PC-3 (cell line): ENCODE measurements at regions of chr12 and their contacts with region 1.

Region 1: DNA sequence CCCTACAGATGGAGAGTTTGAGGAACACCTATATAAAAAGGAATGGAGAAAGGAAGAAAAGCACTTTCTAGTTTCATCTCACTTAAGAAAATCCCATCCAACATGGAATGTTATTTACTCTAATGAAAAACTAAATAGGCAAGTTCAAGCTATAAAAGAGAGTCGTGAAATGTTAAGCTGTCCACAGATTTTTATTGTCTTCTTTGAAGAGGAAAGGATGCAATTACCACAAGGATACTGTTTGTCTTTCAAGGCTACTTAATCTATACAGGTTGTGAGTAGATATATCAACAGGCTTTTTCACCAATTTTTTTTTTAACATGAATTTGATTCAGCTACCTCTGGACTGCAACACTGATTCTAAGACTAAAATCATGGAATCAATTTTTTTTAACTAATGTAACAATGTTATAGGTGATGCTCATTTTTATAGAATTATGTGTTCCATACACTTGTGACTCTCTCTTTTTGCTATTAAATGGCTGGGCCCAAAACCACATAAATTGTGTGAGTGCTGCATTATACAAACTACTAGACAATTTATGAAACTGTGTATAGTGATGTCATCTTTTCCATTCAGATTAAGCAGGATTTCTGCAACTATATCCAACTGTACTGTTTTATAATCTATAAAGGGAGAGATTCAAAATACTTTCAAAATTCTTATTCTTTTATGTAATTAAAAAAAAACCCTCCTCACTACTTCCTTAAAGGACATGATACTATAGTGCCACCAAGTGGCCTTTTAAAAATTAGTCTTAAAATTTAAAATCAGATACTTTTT is 26.8 kb upstream of the BMAL2 start:
- DNase-seq: peak; percentile 84
- ATAC-seq: peak; percentile 43
- H3K4me3 ChIP-seq: no peak overlapping the region
- H3K27ac ChIP-seq: no peak overlapping the region
- H3K4me1 ChIP-seq: peaks cover 10% of the 10 kb centered on the region
- H3K27me3 ChIP-seq: no peaks in the 10 kb centered on the region
- CTCF ChIP-seq: peak; percentile 79

Region 2: DNA sequence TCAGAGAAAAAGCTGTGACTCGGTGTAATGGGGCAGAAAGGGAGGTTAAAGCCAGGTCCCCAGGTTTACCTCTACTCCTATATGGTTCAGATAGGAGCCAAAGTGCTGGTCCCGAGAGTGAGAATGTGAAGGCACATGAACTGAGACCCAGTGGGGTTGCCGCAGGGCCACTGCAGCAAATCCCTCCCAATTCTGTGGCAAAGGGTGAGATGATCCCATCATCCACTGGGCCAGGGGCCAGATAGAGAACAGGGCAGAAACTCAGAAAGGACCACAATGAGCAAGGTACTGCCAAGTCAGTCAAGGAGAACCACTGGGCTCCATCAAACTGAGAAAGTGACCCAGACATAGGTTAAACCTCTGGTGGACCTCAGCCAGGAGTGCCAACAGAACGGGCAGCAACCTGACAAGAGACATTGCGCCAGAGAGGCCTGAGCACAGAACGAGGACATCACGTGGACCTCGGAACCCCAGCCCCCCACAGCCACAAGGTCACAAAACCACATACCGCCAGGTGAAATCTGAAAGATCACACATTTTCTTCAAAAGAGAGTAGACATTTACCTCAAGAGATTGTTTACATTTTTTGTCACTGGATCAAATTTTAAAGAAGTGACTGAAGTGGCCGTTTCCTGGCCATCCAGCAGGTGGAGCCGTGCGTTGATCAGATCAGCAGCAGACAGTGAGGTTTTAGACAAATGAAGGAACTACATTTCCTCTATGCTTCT is 452.4 kb before region 1 on chr12:
- CTCF ChIA-PET with region 1: no interaction called
- POLR2A ChIA-PET with region 1: no interaction called
- intact Hi-C with region 1: loop called (anchors 10 kb)
- DNase-seq: peak; percentile 83
- ATAC-seq: peak; percentile 95
- H3K4me3 ChIP-seq: no peak overlapping the region
- H3K27ac ChIP-seq: no peak overlapping the region
- H3K4me1 ChIP-seq: peaks cover 3% of the 10 kb centered on the region; the same call in 1 of the 2 replicates
- H3K27me3 ChIP-seq: no peaks in the 10 kb centered on the region
- CTCF ChIP-seq: peak; percentile 99

Region 3: GRCh38 chr12:27014085-27014858 is 291.6 kb before region 1 on chr12 and contains the start of gene TM7SF3:
- CTCF ChIA-PET with region 1: interaction called, 31 read pairs
- POLR2A ChIA-PET with region 1: no interaction called
- intact Hi-C with region 1: loop called (anchors 1 kb)
- DNase-seq: peak; percentile 99
- ATAC-seq: peak; percentile 80
- H3K4me3 ChIP-seq: peak within 1 kb of the TSS; percentile 89
- H3K27ac ChIP-seq: peak within 1 kb of the TSS; percentile 51
- H3K4me1 ChIP-seq: peaks cover 40% of the 10 kb centered on the region
- H3K27me3 ChIP-seq: no peaks in the 10 kb centered on the region
- CTCF ChIP-seq: peak; percentile 98
- total RNA-seq, gene TM7SF3: 109 and 114 TPM in 2 replicates

Region 4: DNA sequence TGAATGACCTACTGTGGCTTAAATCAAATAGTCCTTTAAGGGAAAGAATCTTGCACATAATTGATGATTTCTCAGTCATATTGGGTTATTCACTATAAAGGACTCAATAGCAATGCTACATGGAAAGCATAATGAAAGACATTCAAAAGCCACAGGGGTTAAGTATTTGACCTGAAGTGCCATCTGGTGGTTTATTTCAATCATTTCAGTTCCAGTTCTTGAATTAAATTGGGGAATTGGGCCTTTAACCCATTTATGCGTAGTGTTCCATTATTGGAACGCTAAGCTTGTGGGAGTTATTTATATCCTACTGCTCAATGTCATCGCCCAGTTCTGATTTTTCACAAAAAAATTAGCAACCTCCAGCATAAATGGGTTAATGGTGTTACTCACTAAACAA is 182.2 kb before region 1 on chr12:
- CTCF ChIA-PET with region 1: interaction called, 8 read pairs
- POLR2A ChIA-PET with region 1: no interaction called
- intact Hi-C with region 1: loop called (anchors 1 kb)
- DNase-seq: peak; percentile 58
- ATAC-seq: peak; percentile 67
- H3K4me3 ChIP-seq: no peak overlapping the region
- H3K27ac ChIP-seq: no peak overlapping the region
- H3K4me1 ChIP-seq: no peaks in the 10 kb centered on the region
- H3K27me3 ChIP-seq: no peaks in the 10 kb centered on the region
- CTCF ChIP-seq: peak; percentile 66

Region 5: DNA sequence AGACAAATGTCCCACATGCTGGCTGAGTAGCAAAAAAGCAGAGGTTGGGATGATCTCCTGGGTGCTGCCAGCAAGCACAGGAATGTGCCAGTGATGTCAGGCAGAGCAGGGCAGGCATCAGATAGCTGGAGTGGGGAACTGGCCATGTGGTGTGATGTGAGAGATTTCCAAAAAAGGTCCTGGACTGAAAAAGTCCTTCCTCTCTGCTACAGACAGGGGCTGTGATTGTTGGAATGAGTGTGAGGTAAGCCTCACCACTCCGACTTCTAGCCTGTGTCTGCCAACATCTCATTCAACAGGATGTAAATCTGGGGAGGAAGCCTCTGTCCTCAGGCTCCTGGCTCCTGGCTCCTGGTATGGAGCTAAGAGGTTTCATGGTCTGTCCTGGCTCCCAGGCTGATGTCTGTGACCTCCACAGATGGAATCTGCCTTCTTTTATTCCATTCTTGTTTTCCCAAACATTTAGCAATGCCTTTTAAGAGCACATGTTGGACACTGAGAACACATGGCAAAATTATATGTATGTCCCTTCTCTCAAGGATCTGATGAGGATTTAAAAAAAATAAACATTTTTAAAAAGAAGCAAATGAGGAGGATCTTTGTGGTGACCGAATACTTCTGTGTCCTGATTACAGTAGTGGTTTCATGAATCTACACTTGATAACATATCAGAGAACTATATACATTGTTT is 111.9 kb before region 1 on chr12:
- CTCF ChIA-PET with region 1: interaction called, 3 read pairs
- POLR2A ChIA-PET with region 1: interaction called, 3 read pairs
- intact Hi-C with region 1: loop called (anchors 1 kb)
- DNase-seq: no peak
- ATAC-seq: peak; percentile 3; the same call in 1 of the 2 replicates
- H3K4me3 ChIP-seq: no peak overlapping the region
- H3K27ac ChIP-seq: no peak overlapping the region
- H3K4me1 ChIP-seq: peaks cover 40% of the 10 kb centered on the region
- H3K27me3 ChIP-seq: no peaks in the 10 kb centered on the region
- CTCF ChIP-seq: no peak

Region 6: DNA sequence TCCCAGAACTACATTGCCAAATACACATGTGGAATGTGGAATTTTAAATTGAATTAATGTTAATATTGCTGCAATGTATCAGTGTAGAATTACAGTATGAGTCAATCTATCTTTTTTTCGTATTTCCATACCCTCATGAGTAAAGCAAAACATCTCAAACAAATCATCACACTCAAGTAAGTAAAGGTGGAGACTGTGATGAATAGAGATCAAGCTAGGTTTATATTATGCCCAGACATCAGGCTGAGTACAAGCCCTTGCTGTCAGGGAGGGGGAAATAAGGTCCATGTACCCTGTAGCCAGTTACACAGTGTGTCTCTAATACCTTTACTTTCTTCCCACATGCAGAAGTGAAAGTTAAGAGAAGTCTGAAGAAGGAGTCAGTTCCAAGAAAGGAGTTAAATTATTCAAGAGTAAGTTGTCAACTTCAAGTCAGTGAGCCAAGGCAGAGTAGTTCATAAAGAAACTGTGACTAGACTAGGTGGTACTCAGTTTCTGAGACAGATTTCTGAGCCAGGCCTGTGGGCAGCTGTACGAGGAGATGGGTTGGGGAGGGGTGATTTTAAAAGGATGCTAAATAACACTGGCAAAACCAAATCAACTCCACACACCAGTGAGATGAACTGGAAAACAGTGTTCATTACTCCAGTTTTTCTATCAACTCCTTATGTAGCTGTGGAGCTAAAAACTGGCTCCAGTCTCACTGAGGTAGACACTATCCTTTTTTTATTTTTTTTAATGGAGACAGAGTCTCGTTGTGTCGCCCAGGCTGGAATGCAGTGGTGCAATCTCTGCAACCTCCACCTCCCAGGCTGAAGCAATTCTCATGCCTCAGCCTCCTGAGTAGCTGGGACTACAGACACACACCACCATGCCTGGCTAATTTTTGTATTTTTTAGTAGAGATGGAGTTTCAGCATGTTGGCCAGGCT is 85.5 kb before region 1 on chr12:
- CTCF ChIA-PET with region 1: no interaction called
- POLR2A ChIA-PET with region 1: no interaction called
- intact Hi-C with region 1: no loop called
- DNase-seq: no peak
- ATAC-seq: peak; percentile 71
- H3K4me3 ChIP-seq: no peak overlapping the region
- H3K27ac ChIP-seq: no peak overlapping the region
- H3K4me1 ChIP-seq: no peaks in the 10 kb centered on the region
- H3K27me3 ChIP-seq: no peaks in the 10 kb centered on the region
- CTCF ChIP-seq: no peak

Region 7: GRCh38 chr12:27260746-27261145 is 45.1 kb before region 1 on chr12:
- CTCF ChIA-PET with region 1: interaction called, 6 read pairs
- POLR2A ChIA-PET with region 1: interaction called, 5 read pairs
- intact Hi-C with region 1: loop called (anchors 2 kb)
- DNase-seq: peak; percentile 40
- ATAC-seq: peak; percentile 55
- H3K4me3 ChIP-seq: no peak overlapping the region
- H3K27ac ChIP-seq: peak overlapping the region; percentile 48
- H3K4me1 ChIP-seq: peaks cover 25% of the 10 kb centered on the region
- H3K27me3 ChIP-seq: no peaks in the 10 kb centered on the region
- CTCF ChIP-seq: no peak

Region 8: GRCh38 chr12:27474344-27474743 is 168.5 kb after region 1 on chr12:
- CTCF ChIA-PET with region 1: no interaction called
- POLR2A ChIA-PET with region 1: interaction called, 12 read pairs
- intact Hi-C with region 1: no loop called
- DNase-seq: peak; percentile 82
- ATAC-seq: peak; percentile 99
- H3K4me3 ChIP-seq: no peak overlapping the region
- H3K27ac ChIP-seq: no peak overlapping the region
- H3K4me1 ChIP-seq: peaks cover 9% of the 10 kb centered on the region
- H3K27me3 ChIP-seq: no peaks in the 10 kb centered on the region
- CTCF ChIP-seq: no peak

Region 9: DNA sequence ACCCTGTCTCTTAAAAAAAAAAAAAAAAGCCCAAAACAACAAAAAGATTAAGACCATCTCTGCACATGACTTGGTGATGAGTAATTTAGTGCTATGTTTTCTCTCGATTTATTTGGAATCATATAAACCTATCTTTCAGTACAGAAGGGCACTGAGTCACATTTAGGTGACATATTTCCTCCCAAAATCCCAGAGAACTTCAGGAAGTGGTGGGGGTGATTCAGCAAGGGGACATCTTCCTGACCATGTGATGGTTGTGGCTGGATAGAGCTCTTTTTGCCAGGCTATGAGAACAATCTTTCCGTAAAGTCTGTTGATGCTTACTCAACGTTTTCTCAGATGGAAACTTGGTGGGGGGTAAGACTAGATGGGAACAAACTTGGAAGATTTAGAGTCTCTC is 268.1 kb after region 1 on chr12:
- CTCF ChIA-PET with region 1: no interaction called
- POLR2A ChIA-PET with region 1: no interaction called
- intact Hi-C with region 1: no loop called
- DNase-seq: peak; percentile 99
- ATAC-seq: peak; percentile 88
- H3K4me3 ChIP-seq: peak overlapping the region; percentile 29; the same call in 1 of the 2 replicates
- H3K27ac ChIP-seq: peak overlapping the region; percentile 96
- H3K4me1 ChIP-seq: peaks cover 66% of the 10 kb centered on the region
- H3K27me3 ChIP-seq: no peaks in the 10 kb centered on the region
- CTCF ChIP-seq: no peak